SK-N-SH (cell line): ENCODE measurements at regions of chr2 and their contacts with region 1.

Region 1: DNA sequence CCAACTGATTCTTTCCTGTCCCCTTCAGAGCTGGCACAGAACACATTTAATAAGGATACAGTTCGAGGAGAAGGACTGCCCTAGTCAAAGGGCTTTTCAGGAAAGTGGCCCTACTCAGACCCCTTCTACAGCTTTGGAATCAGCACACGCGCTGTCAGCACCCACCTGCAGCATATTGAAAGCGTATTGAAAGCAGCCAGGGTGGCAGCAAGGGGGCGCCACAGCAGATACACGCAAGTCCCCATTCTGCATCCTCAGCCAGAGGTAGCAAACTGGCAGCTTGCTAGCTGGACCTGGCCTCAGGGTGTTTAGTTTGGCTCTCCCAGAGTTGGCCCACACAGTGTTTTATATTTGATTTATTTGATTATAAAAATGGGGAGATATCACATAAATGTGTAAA is 101.0 kb upstream of the NT5C1B start:
- DNase-seq: peak; percentile 27
- H3K4me3 ChIP-seq: no peak overlapping the region
- H3K27ac ChIP-seq: no peak overlapping the region
- H3K4me1 ChIP-seq: peaks cover 0 to 4% of the 10 kb centered on the region in 2 experiments; a peak in 2 of 4 replicates
- H3K27me3 ChIP-seq: no peaks in the 10 kb centered on the region
- CTCF ChIP-seq: peak; percentile 45
- EP300 ChIP-seq: no peak
- RAD21 ChIP-seq: peak; percentile 23

Region 2: GRCh38 chr2:18578033-18578432 is 112.3 kb before region 1 on chr2:
- CTCF ChIA-PET with region 1: no interaction called
- POLR2A ChIA-PET with region 1: no interaction called
- DNase-seq: no peak
- H3K4me3 ChIP-seq: no peak overlapping the region
- H3K27ac ChIP-seq: no peak overlapping the region
- H3K4me1 ChIP-seq: no peaks in the 10 kb centered on the region
- H3K27me3 ChIP-seq: no peaks in the 10 kb centered on the region
- CTCF ChIP-seq: no peak
- EP300 ChIP-seq: no peak
- RAD21 ChIP-seq: no peak

Region 3: DNA sequence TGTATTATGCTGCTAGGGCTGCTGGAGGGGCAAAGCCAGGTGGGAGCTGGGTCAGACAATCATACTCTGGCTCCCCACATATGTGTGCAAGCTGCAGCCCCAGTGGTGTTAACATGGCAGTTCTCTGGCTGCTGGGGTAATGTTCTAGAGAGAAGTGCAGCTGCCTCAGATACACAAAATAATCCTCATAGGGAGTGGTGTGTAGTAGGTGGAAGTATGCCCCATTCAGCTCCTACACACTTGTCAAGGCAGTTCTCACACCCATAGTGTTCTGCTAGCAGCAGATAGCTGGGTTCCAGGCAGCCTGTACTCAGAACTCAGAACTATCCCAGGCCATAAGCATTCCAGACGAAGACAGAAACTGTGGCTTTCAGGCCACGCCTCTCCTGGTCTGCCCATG is 13.1 kb before region 1 on chr2:
- CTCF ChIA-PET with region 1: interaction called, 10 read pairs
- POLR2A ChIA-PET with region 1: no interaction called
- DNase-seq: no peak
- H3K4me3 ChIP-seq: no peak overlapping the region
- H3K27ac ChIP-seq: no peak overlapping the region
- H3K4me1 ChIP-seq: no peaks in the 10 kb centered on the region
- H3K27me3 ChIP-seq: no peaks in the 10 kb centered on the region
- CTCF ChIP-seq: no peak
- EP300 ChIP-seq: no peak
- RAD21 ChIP-seq: no peak

Region 4: GRCh38 chr2:18701981-18702380 is 11.6 kb after region 1 on chr2:
- CTCF ChIA-PET with region 1: interaction called, 22 read pairs
- POLR2A ChIA-PET with region 1: no interaction called
- DNase-seq: no peak
- H3K4me3 ChIP-seq: no peak overlapping the region
- H3K27ac ChIP-seq: peak overlapping the region in 1 of 2 experiments; percentile 64; a peak in 2 of 4 replicates
- H3K4me1 ChIP-seq: peaks cover 0 to 6% of the 10 kb centered on the region in 2 experiments; a peak in 1 of 4 replicates
- H3K27me3 ChIP-seq: no peaks in the 10 kb centered on the region
- CTCF ChIP-seq: no peak
- EP300 ChIP-seq: no peak
- RAD21 ChIP-seq: no peak